Left cardiac atrium (tissue), 4 donors: ENCODE measurements at regions of chr18 and their contacts with region 1.

Region 1: GRCh38 chr18:79507076-79507545 is 111.4 kb downstream of the NFATC1 start:
- DNase-seq: peak; percentile 91
- ATAC-seq: peak; percentile 83 to 92

Region 2: DNA sequence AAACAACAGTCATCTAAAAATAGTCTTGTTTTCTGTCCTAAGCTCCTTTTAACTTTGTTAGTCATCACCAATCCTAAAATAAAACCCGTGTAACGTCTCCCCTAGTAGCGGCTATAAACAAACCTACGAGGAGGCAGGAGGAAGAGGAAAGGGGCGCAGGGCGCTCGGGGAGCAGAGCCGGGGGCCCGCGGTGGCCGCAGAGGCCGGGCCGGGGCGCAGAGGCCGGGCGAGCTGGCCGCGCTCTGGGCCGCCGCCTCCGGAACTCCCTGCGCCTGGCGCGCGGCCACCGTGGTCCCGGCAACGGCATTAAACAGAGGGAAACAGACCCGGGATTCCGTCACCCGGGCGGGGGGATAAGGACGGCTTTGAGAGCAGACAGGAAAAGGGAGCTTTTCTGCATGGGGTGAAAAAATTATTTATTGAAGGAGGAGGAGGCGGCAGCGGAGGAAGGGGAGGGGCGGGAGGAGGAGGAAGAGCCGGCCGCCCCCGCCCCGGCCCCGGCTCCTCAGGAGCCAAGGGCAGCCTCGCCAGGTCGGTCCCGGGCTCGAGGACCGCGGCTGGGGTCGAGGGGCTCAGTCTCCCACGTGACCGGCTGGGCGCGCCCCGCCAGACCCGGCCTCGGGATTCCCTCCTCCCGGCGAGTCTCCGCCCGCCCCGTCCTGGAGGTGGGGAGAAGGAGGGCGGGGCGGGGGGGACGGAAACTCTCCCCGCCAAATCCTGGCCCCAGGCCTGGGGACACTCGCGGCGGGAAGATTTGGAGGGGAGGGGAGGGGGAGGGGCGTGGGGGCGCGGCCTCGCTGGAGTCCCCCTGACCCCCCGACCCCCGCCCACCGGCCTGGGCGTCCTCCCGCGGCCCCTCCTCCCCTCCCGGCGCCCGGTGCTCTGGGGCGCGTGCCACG is 113.2 kb before region 1 on chr18:
- intact Hi-C with region 1: loop called in 1 of 2 experiments (anchors 5 kb)
- DNase-seq: peak; percentile 97
- ATAC-seq: peak; percentile 78 to 82

Region 3: DNA sequence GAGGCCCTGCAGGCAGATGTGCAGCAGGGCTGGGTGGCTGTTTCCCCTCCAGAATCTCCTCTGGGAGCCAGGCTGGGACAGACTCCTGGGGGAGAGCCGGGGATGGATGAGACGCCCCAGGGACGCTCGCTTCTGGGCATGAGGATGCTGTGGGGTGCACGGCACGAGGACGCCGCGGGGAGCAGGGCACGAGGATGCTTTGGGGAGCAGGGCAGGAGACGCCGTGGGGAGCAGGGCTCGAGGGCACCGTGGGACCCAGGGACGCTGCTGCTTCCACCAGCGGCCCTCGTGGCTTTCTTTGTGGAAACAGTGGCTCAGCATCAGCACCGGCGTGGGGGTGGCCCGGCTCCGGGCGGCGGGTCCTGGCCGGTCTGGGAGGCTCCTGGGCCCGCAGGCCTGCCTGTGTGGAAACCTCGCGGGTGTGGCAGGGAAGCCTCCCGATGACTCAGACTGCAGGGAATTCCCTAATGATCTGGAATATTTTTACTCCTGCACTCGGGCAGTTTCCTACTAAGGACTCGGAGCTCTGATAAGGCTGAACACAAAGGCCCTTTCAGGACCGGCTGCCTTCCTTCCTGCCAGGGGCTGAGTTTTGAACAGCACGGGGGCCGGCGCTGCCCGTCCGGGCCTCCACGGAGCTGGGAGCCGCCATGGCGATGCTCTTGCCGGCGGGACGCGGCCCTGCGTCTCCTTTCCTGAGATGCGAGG is 48.8 kb before region 1 on chr18:
- intact Hi-C with region 1: loop called in 1 of 2 experiments (anchors 5 kb)
- DNase-seq: peak; percentile 88
- ATAC-seq: peak; percentile 83 to 89

Region 4: GRCh38 chr18:79588636-79589481 is 81.7 kb after region 1 on chr18:
- intact Hi-C with region 1: no loop called
- DNase-seq: peak; percentile 91
- ATAC-seq: peak; percentile 89 to 94

Region 5: DNA sequence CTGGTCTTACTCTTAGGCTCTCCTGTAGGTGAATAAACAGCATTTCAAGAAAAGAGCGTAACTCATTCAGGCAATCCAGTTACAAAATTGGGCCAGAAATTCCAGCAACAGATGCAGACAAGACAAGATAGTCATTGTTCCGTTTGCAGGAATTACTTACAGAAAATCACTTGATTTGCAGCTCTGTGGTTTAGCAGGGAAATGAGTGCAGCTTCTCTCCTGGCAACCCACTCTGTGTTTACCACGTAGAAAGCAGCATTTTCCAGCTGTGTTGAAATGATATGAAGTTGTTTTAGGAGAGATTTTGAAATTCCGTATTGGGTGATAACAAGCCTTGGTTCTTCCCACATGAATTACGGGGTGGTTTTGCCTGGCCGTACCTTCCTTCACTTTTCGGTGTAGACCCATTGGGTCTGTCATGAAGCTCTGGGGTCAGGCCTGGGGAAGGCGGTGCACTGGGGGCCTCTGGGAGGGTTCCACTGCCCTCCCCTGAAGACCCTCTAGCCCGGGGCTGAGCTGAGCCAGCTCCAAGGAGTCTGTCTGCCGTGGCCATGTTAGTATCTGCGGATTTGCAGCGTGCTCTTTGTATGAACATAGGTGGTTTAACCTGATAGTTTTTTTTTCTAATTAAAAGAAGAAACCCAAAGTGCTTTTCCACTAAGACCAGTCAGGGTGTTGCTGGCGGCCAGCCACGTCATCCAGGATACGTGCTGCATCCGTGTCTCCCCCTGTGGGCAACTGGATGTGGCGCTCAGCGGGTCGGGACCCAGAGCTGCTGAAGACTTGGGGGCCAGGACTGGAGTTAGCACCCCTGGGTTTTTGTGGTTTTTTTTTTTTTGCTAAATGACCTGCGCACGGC is 231.7 kb after region 1 on chr18:
- intact Hi-C with region 1: no loop called
- DNase-seq: no peak
- ATAC-seq: peak; percentile 44 to 49